Dorsolateral prefrontal cortex (tissue), 120 donors: ENCODE measurements at regions of chr1 and their contacts with region 1.

Region 1: GRCh38 chr1:64469977-64470664 is at the start of gene CACHD1:
- DNase-seq: peak; percentile 17 to 75 (median 71)
- H3K4me3 ChIP-seq: peak within 1 kb of the TSS; percentile 48 to 83 (median 72)
- H3K27ac ChIP-seq: peak within 1 kb of the TSS in 52 of 59 donors; percentile 12 to 88 (median 70)
- H3K27me3 ChIP-seq: peaks cover 0 to 11% (median 0%) of the 10 kb centered on the region in 45 donors
- CTCF ChIP-seq: peak in 47 of 56 donors; percentile 6 to 60 (median 38)
- total RNA-seq, gene CACHD1: 11.3 to 40.6 (median 20.3) TPM

Region 2: GRCh38 chr1:64268653-64269557 is 201.2 kb before region 1 on chr1:
- intact Hi-C with region 1: loop called in 1 of 2 experiments (anchors 10 kb)
- DNase-seq: peak in 6 of 10 donors; percentile 54 to 79 (median 60)
- H3K4me3 ChIP-seq: peak overlapping the region in 39 of 59 donors; percentile 1 to 55 (median 38)
- H3K27ac ChIP-seq: peak overlapping the region in 2 of 59 donors; percentile 6 to 34
- H3K27me3 ChIP-seq: no peaks in the 10 kb centered on the region
- CTCF ChIP-seq: peak; percentile 69 to 96 (median 88)

Region 3: DNA sequence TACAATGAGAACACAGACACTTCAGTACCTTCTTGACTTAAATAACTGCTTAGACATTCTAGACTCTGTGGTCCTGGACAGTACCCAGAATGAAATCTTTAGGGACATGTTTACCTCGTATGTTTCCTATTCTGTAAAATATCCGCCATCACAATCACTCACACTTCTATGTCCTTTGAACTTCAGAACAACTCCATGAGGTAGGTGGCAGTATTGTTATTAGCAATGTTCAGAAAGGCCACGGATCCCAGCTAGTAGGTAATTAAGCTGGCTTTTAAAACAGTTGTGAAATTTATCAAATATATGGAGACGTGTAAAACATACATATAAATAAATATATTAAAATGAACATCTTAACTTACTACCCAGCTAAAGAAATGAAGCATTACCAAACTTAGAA is 83.2 kb after region 1 on chr1:
- intact Hi-C with region 1: no loop called
- DNase-seq: no peak
- H3K4me3 ChIP-seq: no peak overlapping the region
- H3K27ac ChIP-seq: no peak overlapping the region
- H3K27me3 ChIP-seq: no peaks in the 10 kb centered on the region
- CTCF ChIP-seq: peak in 5 of 56 donors; percentile 9 to 25 (median 13)

Region 4: DNA sequence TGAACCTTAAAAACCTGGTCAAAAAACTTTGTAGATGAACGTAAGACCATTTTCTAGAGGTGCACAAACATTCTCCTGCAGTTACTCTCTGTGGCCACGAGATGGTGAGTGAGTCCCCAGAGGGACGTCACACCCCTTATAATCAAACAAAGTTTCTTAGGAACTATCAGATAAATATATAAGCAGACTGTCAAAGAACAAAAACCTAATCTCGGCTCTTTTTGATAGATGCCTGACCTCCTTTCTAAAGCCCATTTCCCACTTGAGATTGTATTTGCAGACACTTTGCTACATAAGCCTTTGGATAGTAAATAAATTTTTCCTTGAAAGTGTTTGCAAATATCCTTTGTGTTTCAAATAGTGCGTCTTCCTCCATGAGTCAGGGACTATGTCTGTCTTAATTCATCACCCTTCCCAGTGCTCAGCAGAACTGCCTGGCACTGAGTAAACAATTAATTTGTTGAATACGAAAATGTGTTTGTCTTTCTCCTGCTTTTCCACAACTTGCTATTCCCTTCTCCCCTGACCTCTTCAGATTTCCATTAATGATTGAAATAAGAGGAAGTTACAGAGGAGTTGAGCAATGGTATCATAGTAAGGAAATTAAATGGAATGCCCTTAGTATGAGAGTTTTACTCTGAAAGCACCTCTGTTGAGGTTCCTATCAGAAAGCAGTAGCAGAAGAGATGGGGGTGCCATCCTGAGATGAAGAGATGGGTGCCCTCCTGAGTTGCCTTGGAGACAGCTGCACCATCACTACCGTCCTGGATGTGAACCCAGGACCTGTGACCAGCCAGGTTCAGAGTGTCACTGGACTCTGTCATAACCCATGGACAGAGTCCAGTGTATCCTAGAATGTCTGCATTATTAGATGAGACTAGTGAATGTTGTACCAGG is 217.0 kb after region 1 on chr1:
- intact Hi-C with region 1: loop called in 1 of 2 experiments (anchors 10 kb)
- DNase-seq: peak in 1 of 10 donors; percentile 17
- H3K4me3 ChIP-seq: no peak overlapping the region
- H3K27ac ChIP-seq: peak overlapping the region in 7 of 59 donors; percentile 7 to 44 (median 11)
- H3K27me3 ChIP-seq: no peaks in the 10 kb centered on the region
- CTCF ChIP-seq: peak; percentile 53 to 90 (median 81)